ENCODE measurements at regions of chr5 and their contacts with region 1.

Region 1: DNA sequence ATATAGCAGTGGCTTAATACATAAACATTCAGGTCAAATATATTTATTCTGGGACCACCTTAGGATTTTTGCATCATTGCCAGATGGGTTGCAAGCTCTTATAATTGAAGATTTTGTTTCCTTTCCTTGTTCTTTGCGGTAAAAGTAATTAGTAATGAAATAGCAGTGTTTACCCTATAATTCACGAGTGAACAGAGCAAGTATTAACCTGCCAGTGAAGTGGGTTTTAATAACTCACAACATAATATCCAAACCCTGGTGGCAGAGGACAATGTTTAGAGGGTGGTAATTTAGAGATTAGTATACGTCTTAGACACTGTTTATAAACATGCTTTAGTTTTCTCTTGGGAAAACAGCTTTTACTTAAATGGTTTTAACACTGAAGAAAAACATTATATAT is 11.8 kb downstream of the ARL14EPL start:
- DNase-seq: no peak
- H3K4me3 ChIP-seq: no peak overlapping the region
- CTCF ChIP-seq: no peak

Region 2: GRCh38 chr5:115977988-115978387 is 66.1 kb before region 1 on chr5:
- in situ Hi-C with region 1: loop called (anchors 5 kb)
- DNase-seq: peak; percentile 53
- H3K4me3 ChIP-seq: no peak overlapping the region
- CTCF ChIP-seq: no peak